ENCODE measurements at regions of chr7 and their contacts with region 1.

Region 1: GRCh38 chr7:73606801-73607691 is 17.3 kb downstream of the MLXIPL start:
- DNase-seq: peak; percentile 47 to 84 (median 49)
- ATAC-seq: peak; percentile 55 to 75 (median 74)
- H3K4me3 ChIP-seq: no peak overlapping the region
- H3K27ac ChIP-seq: no peak overlapping the region
- H3K4me1 ChIP-seq: peaks cover 0 to 6% (median 0%) of the 10 kb centered on the region in 12 donors
- H3K27me3 ChIP-seq: peaks cover 3 to 45% (median 18%) of the 10 kb centered on the region in 9 donors
- CTCF ChIP-seq: peak; percentile 90 to 97 (median 95)
- POLR2A ChIP-seq: no peak

Region 2: DNA sequence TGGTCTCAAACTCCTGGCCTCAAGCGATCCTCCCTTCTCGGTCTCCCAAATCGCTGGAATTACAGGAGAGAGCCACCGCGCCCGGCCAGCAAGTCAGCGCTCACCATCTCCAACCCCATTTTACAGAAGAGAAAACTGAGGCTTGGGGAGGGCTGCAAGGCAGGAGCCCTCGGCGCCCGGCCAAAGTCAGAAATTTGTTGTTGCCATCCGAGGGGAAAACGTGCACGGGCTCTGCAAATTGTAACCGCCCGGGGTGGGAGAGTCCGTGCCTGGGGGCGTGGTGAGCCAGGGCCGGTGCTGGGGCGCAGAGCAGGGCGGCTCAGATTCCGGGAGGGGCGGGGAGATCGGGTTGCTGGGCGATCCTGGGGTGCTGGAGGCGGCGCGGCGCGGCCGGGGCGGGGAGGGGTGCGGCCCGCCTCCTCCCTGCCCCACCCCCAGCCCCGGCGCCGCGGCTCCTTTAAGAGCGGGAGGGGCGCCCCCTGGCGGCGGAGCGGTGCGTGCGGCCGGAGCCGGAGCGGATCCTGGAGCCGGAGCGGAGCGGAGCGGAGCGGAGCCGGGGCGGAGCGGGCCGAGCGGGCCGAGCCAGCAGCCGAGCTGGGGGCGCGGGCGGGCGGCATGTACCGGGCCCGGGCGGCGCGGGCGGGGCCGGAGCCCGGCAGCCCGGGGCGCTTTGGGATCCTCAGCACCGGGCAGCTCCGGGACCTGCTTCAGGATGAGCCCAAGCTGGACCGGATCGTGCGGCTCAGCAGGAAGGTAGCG is 60.5 kb after region 1 on chr7 and contains the start of gene VPS37D:
- intact Hi-C with region 1: loop called in 9 of 10 experiments (anchors 2 to 10 kb)
- DNase-seq: peak; percentile 89 to 96 (median 90)
- ATAC-seq: peak; percentile 60 to 95 (median 94)
- H3K4me3 ChIP-seq: peak within 1 kb of the TSS; percentile 34 to 97 (median 60)
- H3K27ac ChIP-seq: peak within 1 kb of the TSS in 3 of 12 donors; percentile 3 to 41 (median 19)
- H3K4me1 ChIP-seq: peaks cover 0 to 20% (median 8%) of the 10 kb centered on the region in 12 donors
- H3K27me3 ChIP-seq: no peaks in the 10 kb centered on the region
- CTCF ChIP-seq: peak; percentile 31 to 97 (median 79)
- POLR2A ChIP-seq: peak in 1 of 2 donors; percentile 19
- total RNA-seq, gene VPS37D: 1.9 to 2.9 (median 2.7) TPM

Region 3: DNA sequence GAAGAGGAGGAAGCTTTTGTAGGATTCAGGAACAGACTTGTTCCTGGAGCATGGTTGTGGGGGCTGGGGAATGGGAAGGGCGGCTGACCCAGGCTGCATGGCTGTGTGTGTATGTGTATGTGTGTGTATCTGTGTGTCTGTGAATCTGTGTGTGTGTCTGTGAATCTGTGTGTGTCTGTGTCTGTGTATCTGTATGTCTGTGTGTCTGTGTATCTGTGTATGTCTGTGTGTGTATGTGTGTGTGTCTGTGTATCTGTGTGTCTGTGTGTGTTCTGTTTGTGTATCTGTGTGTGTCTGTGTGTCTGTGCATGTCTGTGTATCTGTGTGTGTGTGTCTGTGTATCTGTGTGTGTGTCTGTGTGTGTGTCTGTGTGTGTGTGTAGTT is 119.0 kb after region 1 on chr7:
- intact Hi-C with region 1: loop called (anchors 1 to 5 kb)
- DNase-seq: no peak
- ATAC-seq: no peak
- H3K4me3 ChIP-seq: no peak overlapping the region
- H3K27ac ChIP-seq: no peak overlapping the region
- H3K4me1 ChIP-seq: peaks cover 0 to 7% (median 0%) of the 10 kb centered on the region in 12 donors
- H3K27me3 ChIP-seq: peaks cover 0 to 24% (median 3%) of the 10 kb centered on the region in 9 donors
- CTCF ChIP-seq: peak in 2 of 12 donors; percentile 3 to 9
- POLR2A ChIP-seq: no peak

Region 4: GRCh38 chr7:73851410-73852234 is 244.6 kb after region 1 on chr7:
- intact Hi-C with region 1: loop called in 6 of 10 experiments (anchors 5 to 10 kb)
- DNase-seq: no peak
- ATAC-seq: peak; percentile 55 to 84 (median 70)
- H3K4me3 ChIP-seq: no peak overlapping the region
- H3K27ac ChIP-seq: peak overlapping the region; percentile 16 to 79 (median 58)
- H3K4me1 ChIP-seq: peaks cover 0 to 24% (median 6%) of the 10 kb centered on the region in 12 donors
- H3K27me3 ChIP-seq: peaks cover 0 to 20% (median 0%) of the 10 kb centered on the region in 9 donors
- CTCF ChIP-seq: no peak
- POLR2A ChIP-seq: no peak

Region 5: GRCh38 chr7:73858807-73859206 is 251.8 kb after region 1 on chr7:
- intact Hi-C with region 1: loop called in 6 of 10 experiments (anchors 5 to 10 kb)
- DNase-seq: no peak
- ATAC-seq: no peak
- H3K4me3 ChIP-seq: no peak overlapping the region
- H3K27ac ChIP-seq: no peak overlapping the region
- H3K4me1 ChIP-seq: peaks cover 0 to 7% (median 2%) of the 10 kb centered on the region in 12 donors
- H3K27me3 ChIP-seq: peaks cover 0 to 14% (median 0%) of the 10 kb centered on the region in 9 donors
- CTCF ChIP-seq: no peak
- POLR2A ChIP-seq: no peak